Activated CD4-positive, alpha-beta T cell treated with anti-CD3 and anti-CD28 coated beads for 36 hours (primary cell): ENCODE measurements at regions of chr17 and their contacts with region 1.

Region 1: GRCh38 chr17:66331038-66331816 is 28.8 kb downstream of the PRKCA start:
- DNase-seq: peak; percentile 46
- ATAC-seq: peak; percentile 74
- H3K4me3 Mint-ChIP-seq: peak overlapping the region; percentile 68
- H3K27ac Mint-ChIP-seq: peak overlapping the region; percentile 93
- H3K4me1 Mint-ChIP-seq: peaks cover 83% of the 10 kb centered on the region
- H3K27me3 Mint-ChIP-seq: no peaks in the 10 kb centered on the region

Region 2: DNA sequence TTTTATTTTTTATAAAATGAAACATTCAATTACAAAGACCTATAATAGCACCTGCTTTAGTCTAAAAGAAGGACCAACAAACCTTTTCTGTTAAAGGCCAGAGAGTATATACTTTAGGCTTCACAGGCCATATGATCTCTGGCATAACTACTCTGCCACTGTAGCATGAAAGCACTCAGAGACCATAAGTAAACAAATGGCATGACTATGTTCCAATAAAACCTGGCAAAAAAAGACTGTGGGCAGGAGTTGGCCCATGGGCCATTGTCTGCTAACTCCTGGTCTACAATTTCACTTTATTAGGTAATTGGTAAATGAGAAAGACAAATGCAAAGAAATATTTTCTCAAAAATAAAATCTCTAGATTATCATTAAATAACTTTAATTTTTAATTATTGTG is 154.2 kb before region 1 on chr17:
- CTCF ChIA-PET with region 1: no interaction called
- POLR2A ChIA-PET with region 1: no interaction called
- intact Hi-C with region 1: no loop called
- DNase-seq: no peak
- ATAC-seq: no peak
- H3K4me3 Mint-ChIP-seq: no peak overlapping the region
- H3K27ac Mint-ChIP-seq: no peak overlapping the region
- H3K4me1 Mint-ChIP-seq: no peaks in the 10 kb centered on the region
- H3K27me3 Mint-ChIP-seq: no peaks in the 10 kb centered on the region

Region 3: GRCh38 chr17:66317629-66318028 is 13.6 kb before region 1 on chr17:
- CTCF ChIA-PET with region 1: interaction called, 17 read pairs
- POLR2A ChIA-PET with region 1: no interaction called
- intact Hi-C with region 1: no loop called
- DNase-seq: no peak
- ATAC-seq: no peak
- H3K4me3 Mint-ChIP-seq: peak overlapping the region; percentile 35
- H3K27ac Mint-ChIP-seq: peak overlapping the region; percentile 92
- H3K4me1 Mint-ChIP-seq: peaks cover 60% of the 10 kb centered on the region
- H3K27me3 Mint-ChIP-seq: no peaks in the 10 kb centered on the region

Region 4: DNA sequence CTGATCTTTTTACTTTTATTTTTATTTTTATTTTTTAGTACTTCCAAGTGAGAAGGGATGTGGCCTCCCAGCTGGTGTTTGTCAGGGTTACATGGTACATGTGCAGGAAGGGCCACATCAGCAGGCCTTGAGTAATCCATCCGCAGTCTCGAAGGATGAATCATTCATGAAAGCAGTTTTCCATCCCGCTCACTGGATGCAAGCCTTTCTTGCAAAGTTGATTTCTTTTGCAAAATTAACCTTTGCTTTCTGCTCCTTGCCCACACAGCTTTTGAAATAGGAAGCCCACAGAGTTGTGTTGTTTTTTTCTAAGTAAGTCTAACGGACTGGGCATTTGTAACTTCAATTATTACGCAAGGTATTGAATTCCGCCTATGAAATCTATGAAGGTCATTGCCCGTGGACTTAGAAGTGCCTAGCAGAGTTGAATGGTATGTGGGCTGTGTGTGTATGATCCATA is 128.6 kb after region 1 on chr17:
- CTCF ChIA-PET with region 1: no interaction called
- POLR2A ChIA-PET with region 1: no interaction called
- intact Hi-C with region 1: no loop called
- DNase-seq: peak; percentile 57
- ATAC-seq: peak; percentile 74
- H3K4me3 Mint-ChIP-seq: no peak overlapping the region
- H3K27ac Mint-ChIP-seq: no peak overlapping the region
- H3K4me1 Mint-ChIP-seq: peaks cover 41% of the 10 kb centered on the region
- H3K27me3 Mint-ChIP-seq: no peaks in the 10 kb centered on the region